Common myeloid progenitor, CD34-positive (primary cell): ENCODE measurements at regions of chr3 and their contacts with region 1.

Region 1: DNA sequence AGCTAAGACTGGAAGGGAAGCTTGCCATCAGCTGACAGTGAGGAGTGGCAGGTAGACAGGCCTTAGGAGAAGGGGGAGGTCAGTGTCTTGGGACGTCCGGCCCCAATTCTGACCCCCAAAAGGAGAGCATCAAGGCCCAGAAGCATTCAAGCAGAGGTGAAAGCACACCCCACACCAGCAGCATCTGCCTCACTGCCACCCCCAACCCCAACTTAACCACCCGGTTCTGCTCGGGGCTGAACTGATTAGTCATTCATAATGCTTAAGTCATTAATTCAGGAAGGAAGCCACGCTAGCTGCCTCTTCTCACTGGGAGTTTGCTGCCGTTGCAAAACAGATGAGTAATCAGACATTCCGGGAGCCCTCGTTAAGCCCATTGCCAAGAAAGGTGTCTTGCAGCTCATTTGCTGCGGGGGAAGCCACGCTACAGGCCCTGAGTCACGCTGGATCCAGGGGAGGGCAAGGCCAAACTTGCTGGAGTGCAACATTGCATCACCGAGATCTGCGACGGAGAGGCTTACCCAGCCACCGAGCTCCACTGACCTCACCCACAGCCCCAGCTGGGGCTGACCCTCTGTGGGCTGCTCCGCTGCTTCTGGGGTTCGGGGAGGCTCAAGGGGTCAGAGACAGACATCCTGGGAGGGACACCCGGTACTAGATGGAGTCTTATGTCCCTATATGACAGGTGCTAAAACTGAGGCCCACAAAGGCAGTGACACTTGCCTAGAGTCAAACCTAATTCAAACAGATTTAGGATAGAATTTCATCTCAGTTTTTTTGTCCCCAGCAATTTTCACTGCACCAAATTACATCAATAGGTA is 46.4 kb upstream of the HES1 start:
- DNase-seq: peak; percentile 93 to 99 (median 98)
- H3K4me3 ChIP-seq: peak overlapping the region in 2 of 7 experiments; percentile 7 to 28
- H3K27ac ChIP-seq: peak overlapping the region in 1 of 2 experiments; percentile 78
- H3K4me1 ChIP-seq: peaks cover 0 to 29% (median 13%) of the 10 kb centered on the region in 4 experiments
- H3K27me3 ChIP-seq: no peaks in the 10 kb centered on the region

Region 2: DNA sequence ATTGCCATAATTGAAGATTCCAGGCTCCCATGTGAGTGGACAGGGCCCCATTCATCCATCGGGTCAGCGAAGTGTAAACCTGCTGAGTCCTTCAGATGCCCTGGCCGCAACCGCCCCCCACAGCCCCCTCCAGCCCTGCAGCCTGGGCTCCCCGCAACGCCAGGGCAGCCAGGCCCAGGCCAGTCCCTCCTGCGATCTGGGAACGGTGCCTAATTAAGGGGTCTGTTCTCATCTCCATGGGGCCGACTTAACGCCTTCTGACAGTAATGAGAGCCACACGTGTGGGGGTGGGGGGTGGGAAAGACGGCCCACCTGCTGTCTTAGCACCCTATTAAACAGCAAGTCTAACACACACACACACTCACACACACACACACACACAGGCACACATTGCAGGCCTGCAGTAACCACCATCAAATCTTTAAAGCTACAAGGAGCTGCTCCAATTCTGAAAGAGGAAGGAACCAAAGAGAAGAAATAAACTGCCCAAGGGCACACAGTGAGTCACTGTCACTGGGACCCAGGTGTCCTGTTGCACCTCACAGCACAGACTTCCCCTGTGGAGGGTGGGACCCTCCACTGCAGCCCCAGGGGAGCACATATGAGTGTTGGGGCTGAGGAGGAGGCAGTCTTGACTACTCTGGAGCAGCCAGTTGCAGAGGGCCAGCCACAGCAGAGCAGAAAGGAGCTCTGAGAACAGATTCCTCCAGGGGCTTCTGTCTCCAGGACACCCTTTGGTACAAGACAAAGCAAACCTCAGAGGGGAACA is 14.6 kb after region 1 on chr3:
- CTCF ChIA-PET with region 1: interaction called, 13 read pairs
- POLR2A ChIA-PET with region 1: no interaction called
- DNase-seq: peak; percentile 50 to 88 (median 83)
- H3K4me3 ChIP-seq: peak overlapping the region in 2 of 7 experiments; percentile 1 to 11
- H3K27ac ChIP-seq: no peak overlapping the region
- H3K4me1 ChIP-seq: peaks cover 0 to 17% (median 9%) of the 10 kb centered on the region in 4 experiments
- H3K27me3 ChIP-seq: peaks cover 0 to 2% (median 0%) of the 10 kb centered on the region in 5 experiments